Common myeloid progenitor, CD34-positive (primary cell): ENCODE measurements at regions of chr19 and their contacts with region 1.

Region 1: DNA sequence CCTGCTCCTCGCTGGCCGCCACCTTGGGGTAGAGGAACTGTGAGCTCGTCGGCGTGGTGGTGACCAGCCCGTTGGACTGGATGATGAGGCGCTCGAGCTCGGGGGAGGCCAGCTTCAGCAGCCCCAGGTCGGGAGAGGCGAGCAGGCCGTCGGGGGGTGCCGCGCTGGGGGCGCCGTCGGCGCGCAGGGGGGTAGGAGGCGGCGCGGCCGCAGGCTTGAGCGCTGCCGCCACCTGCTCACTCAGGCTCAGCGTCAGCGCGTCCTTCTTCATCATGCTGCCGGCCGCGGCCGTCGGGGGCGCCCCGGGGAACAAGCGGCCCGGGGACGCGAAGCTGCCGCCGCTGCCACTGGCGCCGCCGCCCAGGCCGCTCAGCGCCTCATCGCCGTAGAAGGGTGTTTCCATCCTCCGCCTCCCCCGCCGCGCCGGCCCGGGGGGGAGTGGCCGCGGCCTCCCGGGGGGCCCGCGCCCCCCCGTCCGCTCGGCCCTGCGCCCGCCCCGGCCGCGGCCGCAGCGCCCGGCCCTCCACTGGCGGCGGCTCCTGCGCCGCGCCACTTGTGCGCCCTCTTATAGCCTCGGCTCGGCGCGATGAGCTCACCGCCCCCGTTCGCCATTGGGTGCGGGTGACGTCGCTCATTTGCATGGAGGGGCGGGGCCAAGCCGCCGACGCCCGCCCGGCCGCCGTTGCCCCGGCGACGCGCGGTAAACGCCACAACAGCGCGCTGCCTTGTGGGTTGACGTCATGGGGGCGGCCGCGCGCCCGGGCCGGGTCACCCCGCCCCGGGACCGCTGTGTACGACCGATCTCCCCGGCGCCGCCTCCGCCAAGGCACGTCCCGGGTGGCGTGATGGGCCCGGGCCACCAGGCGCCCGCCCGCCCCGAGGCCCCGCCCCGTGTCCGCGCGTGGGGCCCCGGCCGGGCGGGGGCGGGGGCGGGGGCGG is at the start of gene JUND:
- DNase-seq: peak; percentile 98 to 99 (median 99)
- H3K4me3 ChIP-seq: peak within 1 kb of the TSS; percentile 86 to 100 (median 99)
- H3K27ac ChIP-seq: peak within 1 kb of the TSS; percentile 98 to 99
- H3K4me1 ChIP-seq: peaks cover 3 to 42% (median 25%) of the 10 kb centered on the region in 4 experiments
- H3K27me3 ChIP-seq: no peaks in the 10 kb centered on the region

Region 2: DNA sequence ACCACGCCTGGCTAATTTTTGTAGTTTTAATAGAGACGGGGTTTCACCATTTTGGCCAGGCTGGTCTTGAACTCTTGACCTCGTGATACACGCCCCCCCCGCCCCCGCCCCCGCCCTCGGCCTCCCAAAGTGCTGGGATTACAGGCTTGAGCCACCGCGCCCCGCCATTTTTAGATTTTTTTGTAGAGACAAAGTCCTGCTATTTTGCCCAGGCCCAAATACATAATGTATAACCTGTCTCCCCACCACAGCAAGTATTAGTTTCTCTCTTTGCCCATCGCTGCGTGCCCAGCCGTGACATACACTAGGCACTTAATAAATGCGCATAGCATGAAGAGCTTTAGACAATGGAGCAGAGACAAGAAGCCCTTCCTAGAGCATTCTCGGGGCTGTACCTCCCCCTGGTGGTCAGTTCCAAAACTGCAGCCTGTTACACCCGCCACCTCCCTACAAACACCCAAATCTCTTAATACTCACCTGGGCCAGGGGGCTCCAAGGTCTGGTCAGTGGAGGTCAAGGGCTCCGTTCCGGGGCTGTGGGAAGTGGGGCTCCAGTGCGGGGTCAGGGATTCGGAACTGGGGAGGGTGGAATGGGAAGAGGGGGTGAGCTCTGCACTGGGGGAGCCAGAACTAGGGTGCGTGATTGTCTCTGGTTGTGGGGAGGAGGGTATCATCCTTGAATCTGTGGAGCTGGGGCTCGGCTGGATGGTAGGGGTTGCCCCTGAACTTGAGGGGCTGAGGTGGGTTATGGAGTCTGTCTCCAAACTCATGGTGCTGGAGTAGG is 29.6 kb before region 1 on chr19:
- CTCF ChIA-PET with region 1: interaction called, 36 read pairs
- POLR2A ChIA-PET with region 1: interaction called, 4 read pairs
- DNase-seq: peak; percentile 67 to 84 (median 76)
- H3K4me3 ChIP-seq: no peak overlapping the region
- H3K27ac ChIP-seq: no peak overlapping the region
- H3K4me1 ChIP-seq: peaks cover 0 to 8% (median 3%) of the 10 kb centered on the region in 4 experiments
- H3K27me3 ChIP-seq: peaks cover 0 to 21% (median 4%) of the 10 kb centered on the region in 5 experiments

Region 3: DNA sequence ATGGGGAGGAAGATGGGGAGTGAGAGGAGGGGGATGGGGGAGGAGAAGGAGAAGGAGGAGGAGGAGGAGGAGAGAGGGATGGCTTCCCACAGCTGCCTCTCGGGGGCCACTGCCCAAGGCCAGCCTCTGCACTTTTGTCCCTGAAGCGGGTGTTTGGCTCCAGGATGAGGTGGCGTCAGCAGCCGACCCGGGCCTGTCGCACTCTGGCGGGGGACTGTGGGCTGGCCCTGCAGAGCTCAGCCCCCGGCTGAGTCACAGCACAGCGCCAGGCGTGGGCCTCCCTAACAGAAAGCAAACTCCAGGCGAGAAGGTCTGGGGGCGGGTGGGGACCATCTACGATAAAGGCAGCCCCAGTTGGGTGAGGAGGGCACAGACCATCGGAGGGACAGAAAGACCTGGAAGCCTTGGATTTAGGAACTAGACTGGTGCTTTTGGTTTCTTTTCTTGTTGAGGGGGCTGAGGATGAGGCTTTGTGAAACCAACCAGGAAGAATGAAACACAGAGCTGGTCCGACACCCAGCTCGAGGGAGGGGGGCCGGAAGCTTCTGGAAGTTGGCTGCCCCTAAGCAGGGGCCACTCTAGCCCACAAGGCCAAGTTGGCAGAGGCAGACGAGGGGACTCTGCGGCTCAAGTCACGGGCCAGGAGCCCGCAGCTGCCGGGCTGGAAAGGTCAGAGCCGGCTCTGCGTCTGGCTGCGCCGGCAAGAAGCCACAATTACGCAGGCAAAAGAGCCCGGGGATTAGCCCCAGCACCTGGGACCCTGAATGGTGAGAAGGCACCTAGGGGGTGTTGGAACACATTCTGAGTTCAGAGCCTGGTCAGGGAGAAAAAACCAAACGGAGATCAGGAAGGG is 23.3 kb after region 1 on chr19:
- CTCF ChIA-PET with region 1: interaction called, 31 read pairs
- POLR2A ChIA-PET with region 1: interaction called, 54 read pairs
- DNase-seq: peak; percentile 87 to 93 (median 91)
- H3K4me3 ChIP-seq: peak overlapping the region; percentile 25 to 77 (median 61)
- H3K27ac ChIP-seq: peak overlapping the region; percentile 95 to 97
- H3K4me1 ChIP-seq: peaks cover 0 to 59% (median 43%) of the 10 kb centered on the region in 4 experiments
- H3K27me3 ChIP-seq: no peaks in the 10 kb centered on the region

Region 4: DNA sequence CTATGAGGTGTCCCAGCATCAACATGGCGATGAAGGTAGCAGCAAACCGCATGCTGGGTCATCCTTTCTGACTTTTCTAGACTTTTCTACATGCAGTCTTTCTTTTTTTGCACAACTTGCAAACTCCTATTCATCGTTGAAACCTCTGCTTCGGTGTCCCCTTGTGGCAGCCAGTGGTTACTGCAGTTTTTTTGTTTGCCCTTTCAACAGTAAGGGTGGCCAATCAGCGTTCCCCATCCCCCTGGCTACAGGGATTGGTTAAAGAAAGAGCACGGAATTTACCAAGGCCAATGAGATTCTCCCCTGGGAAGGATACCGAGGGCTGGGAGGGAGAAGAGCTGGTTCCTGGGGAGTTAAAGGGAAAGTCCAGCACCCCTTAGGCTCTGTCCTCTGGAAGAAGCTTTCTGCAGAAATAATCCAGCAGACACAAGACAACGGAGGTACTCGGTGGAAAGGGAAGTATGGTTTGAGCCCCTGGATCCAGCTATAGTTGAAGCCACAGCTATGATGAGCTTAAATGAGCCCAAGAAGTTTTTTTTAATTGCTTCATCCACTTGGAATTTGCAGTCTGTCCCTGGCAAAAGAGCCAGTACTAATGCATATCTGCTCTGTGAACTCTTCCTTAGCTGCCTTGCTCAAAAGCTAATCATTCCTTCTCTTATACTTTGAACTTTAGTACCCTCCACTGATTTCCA is 47.1 kb after region 1 on chr19:
- CTCF ChIA-PET with region 1: interaction called, 354 read pairs
- POLR2A ChIA-PET with region 1: interaction called, 217 read pairs
- DNase-seq: peak; percentile 93 to 96 (median 94)
- H3K4me3 ChIP-seq: peak overlapping the region; percentile 11 to 77 (median 55)
- H3K27ac ChIP-seq: peak overlapping the region in 1 of 2 experiments; percentile 52
- H3K4me1 ChIP-seq: peaks cover 6 to 19% (median 12%) of the 10 kb centered on the region in 4 experiments
- H3K27me3 ChIP-seq: no peaks in the 10 kb centered on the region

Region 5: DNA sequence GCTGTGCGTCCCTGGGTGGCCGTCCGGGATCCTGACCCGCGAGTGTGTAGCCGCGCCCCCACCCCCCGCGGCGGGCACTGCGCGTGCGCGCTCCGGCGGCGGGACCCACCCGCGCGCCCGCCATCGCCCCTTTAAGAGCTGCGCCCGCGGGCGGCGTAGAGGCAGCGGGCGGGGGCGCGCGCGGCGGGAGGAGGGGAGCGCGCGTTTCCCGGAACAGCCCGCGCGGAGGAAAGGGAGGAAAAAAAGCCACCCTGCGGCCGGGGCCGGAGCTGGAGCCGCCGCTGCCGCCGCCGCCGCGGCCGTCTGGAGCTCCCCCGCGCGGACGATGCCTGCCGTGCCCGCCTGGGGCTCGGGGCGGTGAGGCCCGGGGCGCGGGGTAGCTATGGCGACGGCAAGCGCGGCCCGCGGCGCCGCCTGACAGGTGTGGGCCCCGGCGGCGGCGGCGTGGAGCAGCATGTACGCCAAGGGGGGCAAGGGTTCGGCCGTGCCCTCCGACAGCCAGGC is 137.9 kb after region 1 on chr19 and contains the start of gene SSBP4:
- CTCF ChIA-PET with region 1: interaction called, 4 read pairs
- POLR2A ChIA-PET with region 1: interaction called, 16 read pairs
- DNase-seq: peak; percentile 68 to 89 (median 85)
- H3K4me3 ChIP-seq: peak within 1 kb of the TSS; percentile 24 to 77 (median 65)
- H3K27ac ChIP-seq: peak within 1 kb of the TSS in 1 of 2 experiments; percentile 56
- H3K4me1 ChIP-seq: peaks cover 3 to 82% (median 74%) of the 10 kb centered on the region in 4 experiments
- H3K27me3 ChIP-seq: no peaks in the 10 kb centered on the region